ENCODE measurements at regions of chr7 and their contacts with region 1.

Region 1: GRCh38 chr7:41003031-41003925 is 699.6 kb downstream of the INHBA start:
- DNase-seq: peak; percentile 57
- H3K4me3 ChIP-seq: no peak overlapping the region
- H3K27ac ChIP-seq: no peak overlapping the region
- H3K4me1 ChIP-seq: no peaks in the 10 kb centered on the region
- H3K27me3 ChIP-seq: no peaks in the 10 kb centered on the region
- CTCF ChIP-seq: peak; percentile 97

Region 2: DNA sequence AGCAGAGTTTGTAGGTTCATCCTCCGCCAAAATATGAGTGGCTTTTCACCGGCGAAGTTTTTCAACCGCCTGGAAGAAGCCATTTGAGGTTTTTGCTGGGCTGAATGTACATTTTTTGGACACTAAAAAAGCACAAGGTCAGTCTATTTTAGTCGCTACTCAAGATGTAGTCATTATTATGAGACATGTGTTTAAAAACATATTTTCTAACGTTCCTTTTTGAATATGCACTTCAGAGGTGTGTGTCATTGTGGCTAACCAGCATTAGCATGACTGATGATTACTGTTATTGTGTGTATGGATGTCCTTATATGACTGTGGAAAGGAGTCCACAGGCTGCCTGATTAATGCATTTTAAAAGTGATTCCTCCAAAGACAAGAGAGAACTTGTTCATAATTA is 94.2 kb after region 1 on chr7:
- CTCF ChIA-PET with region 1: no interaction called
- POLR2A ChIA-PET with region 1: no interaction called
- intact Hi-C with region 1: no loop called
- DNase-seq: no peak
- H3K4me3 ChIP-seq: no peak overlapping the region
- H3K27ac ChIP-seq: no peak overlapping the region
- H3K4me1 ChIP-seq: no peaks in the 10 kb centered on the region
- H3K27me3 ChIP-seq: no peaks in the 10 kb centered on the region
- CTCF ChIP-seq: no peak

Region 3: DNA sequence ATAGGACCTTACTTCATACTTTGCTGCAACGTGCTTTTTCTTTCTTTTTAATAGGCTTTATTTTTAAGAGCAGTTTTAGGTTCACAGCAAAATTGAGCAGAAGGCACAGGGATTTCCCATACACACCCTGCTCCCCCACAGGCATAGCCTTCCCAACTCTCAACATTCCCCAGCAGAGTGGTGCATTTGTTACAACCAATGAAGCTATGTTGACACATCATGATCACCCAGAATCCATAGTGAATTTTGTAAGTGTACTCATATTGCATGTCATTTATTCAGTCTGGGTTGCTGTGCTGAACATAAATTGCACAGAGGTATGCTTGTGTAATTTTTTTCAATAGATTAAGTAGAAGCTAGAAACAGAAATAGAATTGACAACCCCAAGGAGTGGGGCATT is 372.3 kb after region 1 on chr7:
- CTCF ChIA-PET with region 1: no interaction called
- POLR2A ChIA-PET with region 1: no interaction called
- intact Hi-C with region 1: loop called (anchors 5 kb)
- DNase-seq: no peak
- H3K4me3 ChIP-seq: no peak overlapping the region
- H3K27ac ChIP-seq: no peak overlapping the region
- H3K4me1 ChIP-seq: no peaks in the 10 kb centered on the region
- H3K27me3 ChIP-seq: no peaks in the 10 kb centered on the region
- CTCF ChIP-seq: no peak

Measured in A673 (cell line).